ENCODE measurements at regions of chr14 and their contacts with region 1.

Region 1: DNA sequence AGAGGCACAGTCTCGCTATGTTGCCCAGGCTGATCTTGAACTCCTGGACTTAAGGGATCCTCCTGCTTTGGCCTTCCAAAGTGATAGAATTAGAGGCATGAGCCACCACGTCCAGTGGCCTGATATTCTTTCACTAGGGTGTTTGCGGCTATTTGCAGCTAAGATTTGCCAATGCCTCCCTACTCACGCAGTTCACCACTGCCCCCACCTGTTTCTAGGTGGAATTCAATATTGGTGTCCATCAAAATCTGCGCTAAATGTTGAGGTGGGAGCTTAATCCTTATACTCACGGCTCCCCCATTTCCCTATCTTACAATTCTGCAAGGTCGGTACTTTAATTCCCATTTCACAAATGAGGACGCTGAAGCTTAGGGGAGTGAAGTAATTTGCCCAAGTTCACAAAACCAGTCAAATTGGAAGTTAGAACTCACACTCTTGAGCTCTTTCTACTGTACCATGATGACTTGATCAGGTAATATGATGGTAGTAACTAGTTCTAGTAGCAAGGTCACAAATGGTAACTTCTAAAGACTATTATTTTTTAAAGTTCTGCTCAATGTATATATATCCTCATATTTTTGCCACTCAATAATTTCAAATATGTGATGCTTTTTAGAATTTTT is 22.1 kb upstream of the LRRC9 start:
- DNase-seq: peak; percentile 50 to 70 (median 65)
- H3K4me3 ChIP-seq: no peak overlapping the region
- H3K27ac ChIP-seq: no peak overlapping the region
- H3K4me1 ChIP-seq: peaks cover 0 to 4% (median 0%) of the 10 kb centered on the region in 4 experiments
- H3K27me3 ChIP-seq: peaks cover 0 to 2% (median 0%) of the 10 kb centered on the region in 5 experiments

Region 2: DNA sequence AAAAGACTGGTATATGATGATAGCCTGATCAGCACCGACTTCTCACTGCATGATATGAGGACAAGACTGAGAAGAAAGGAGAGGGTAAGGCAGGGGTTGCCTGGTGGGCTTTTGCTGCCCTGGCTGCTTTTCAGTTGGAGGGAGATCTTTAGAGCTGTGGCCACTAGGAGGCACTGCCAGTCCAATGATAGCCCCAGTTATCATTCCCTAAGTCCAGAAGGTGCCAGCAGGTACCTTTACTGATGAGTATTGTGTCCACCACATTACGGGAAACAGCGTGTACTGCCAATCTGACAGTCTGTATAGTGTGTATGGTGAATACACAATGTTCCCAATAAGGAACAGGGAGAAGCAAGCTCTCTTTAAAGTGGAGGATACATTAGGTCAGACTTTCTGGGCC is 265.5 kb before region 1 on chr14:
- CTCF ChIA-PET with region 1: interaction called, 39 read pairs
- POLR2A ChIA-PET with region 1: no interaction called
- DNase-seq: peak; percentile 31 to 59 (median 52)
- H3K4me3 ChIP-seq: no peak overlapping the region
- H3K27ac ChIP-seq: no peak overlapping the region
- H3K4me1 ChIP-seq: peaks cover 0 to 12% (median 10%) of the 10 kb centered on the region in 4 experiments
- H3K27me3 ChIP-seq: peaks cover 10 to 30% (median 23%) of the 10 kb centered on the region in 5 experiments

Region 3: GRCh38 chr14:59711080-59711479 is 186.8 kb before region 1 on chr14:
- CTCF ChIA-PET with region 1: interaction called, 10 read pairs
- POLR2A ChIA-PET with region 1: no interaction called
- DNase-seq: no peak
- H3K4me3 ChIP-seq: no peak overlapping the region
- H3K27ac ChIP-seq: no peak overlapping the region
- H3K4me1 ChIP-seq: no peaks in the 10 kb centered on the region
- H3K27me3 ChIP-seq: peaks cover 0 to 2% (median 0%) of the 10 kb centered on the region in 5 experiments

Region 4: DNA sequence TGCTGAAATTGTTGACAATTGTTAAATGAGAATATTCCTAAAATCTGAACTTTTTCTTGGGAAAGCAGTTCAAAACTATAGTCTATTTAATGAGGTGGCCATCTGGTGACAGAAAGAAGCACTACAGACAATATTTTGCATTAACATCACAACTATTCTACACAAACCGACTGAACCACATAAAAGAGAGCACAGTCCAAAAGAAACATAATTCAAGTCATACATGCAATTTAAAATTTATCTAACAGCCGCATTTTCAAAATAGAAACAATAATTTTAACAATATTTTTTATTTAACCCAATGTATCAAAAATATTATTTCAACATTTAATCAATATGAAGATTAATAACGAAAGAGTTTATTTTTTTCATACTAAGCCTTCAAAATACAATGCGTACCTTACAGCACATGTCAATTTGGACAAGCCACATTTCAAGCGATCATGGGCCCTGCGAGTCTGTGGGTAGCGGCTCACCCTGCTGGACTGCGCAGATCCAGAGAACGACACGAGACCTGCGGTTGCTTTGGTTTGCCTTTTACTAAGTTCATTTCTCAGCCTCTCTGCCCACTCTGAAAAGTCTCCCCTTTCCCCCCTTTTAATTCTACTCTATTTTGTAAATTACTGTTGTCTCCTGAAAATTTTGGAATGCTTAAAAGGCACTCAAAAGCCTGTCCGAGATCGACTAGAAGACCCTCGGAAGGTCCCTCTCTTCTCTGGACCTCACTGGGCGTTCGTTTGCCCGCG is 21.1 kb after region 1 on chr14:
- CTCF ChIA-PET with region 1: interaction called, 10 read pairs
- POLR2A ChIA-PET with region 1: no interaction called
- DNase-seq: peak; percentile 49 to 85 (median 81)
- H3K4me3 ChIP-seq: peak overlapping the region; percentile 34 to 84 (median 65)
- H3K27ac ChIP-seq: no peak overlapping the region
- H3K4me1 ChIP-seq: peaks cover 7 to 15% (median 11%) of the 10 kb centered on the region in 4 experiments
- H3K27me3 ChIP-seq: peaks cover 0 to 11% (median 0%) of the 10 kb centered on the region in 5 experiments

Region 5: DNA sequence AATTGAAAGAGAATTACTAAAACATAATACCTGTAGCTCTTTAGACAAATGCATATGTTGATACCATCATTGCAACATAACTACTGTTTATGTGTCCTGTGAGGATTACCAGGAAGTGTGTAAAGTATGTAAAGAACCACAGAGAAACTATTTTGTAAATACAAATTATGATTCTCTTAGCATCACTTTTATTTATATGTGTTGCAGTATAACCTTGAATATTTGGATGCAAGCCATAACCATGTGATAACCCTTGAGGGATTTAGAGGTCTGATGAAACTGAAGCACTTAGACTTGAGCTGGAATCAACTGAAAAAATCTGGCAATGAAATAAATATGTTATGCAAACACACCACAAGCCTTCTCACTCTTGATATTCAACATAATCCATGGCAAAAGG is 99.6 kb after region 1 on chr14:
- CTCF ChIA-PET with region 1: no interaction called
- POLR2A ChIA-PET with region 1: no interaction called
- DNase-seq: no peak
- H3K4me3 ChIP-seq: no peak overlapping the region
- H3K27ac ChIP-seq: no peak overlapping the region
- H3K4me1 ChIP-seq: no peaks in the 10 kb centered on the region
- H3K27me3 ChIP-seq: no peaks in the 10 kb centered on the region